PC-9 (cell line): ENCODE measurements at regions of chr3 and their contacts with region 1.

Region 1: DNA sequence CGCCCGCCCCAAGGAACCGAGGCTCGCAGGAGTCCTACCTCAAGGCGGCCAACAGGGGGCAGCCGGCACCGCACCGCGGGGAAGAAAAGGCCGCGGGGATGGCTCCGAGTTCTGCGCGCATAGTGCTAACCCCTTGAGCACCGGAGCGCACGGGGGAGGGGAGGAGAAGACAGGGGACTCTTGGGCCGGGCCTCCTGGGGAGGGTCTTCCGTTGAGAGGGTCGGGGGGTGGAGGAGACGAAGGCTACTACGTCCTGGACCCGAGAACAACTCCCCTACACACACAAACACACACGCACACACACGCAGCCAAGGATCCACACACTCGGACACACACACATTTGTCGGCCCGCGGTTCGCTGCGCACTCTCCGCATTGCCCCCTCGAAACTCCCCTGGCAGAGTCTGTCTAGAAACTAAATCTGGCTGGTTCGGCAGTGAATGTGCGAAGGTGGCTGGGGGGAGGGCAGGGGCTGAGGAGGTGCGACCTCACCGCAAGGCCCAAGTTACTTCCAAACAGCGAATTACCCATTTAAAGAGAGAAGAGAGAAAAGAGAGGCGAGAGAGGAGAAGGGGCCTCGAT is 1.8 kb downstream of the WNT5A start:
- DNase-seq: peak in 1 of 2 experiments; percentile 79
- H3K4me3 ChIP-seq: peak overlapping the region; percentile 58; the same call in 1 of the 2 replicates
- H3K27ac ChIP-seq: peak overlapping the region; percentile 73
- H3K4me1 ChIP-seq: peaks cover 6% of the 10 kb centered on the region
- H3K27me3 ChIP-seq: no peaks in the 10 kb centered on the region
- CTCF ChIP-seq: peak; percentile 27

Region 2: GRCh38 chr3:54853573-54854404 is 631.5 kb before region 1 on chr3:
- CTCF ChIA-PET with region 1: interaction called, 5 read pairs
- POLR2A ChIA-PET with region 1: no interaction called
- intact Hi-C with region 1: loop called (anchors 5 kb)
- DNase-seq: peak in 1 of 2 experiments; percentile 67
- H3K4me3 ChIP-seq: no peak overlapping the region
- H3K27ac ChIP-seq: no peak overlapping the region
- H3K4me1 ChIP-seq: no peaks in the 10 kb centered on the region
- H3K27me3 ChIP-seq: no peaks in the 10 kb centered on the region
- CTCF ChIP-seq: peak; percentile 93

Region 3: DNA sequence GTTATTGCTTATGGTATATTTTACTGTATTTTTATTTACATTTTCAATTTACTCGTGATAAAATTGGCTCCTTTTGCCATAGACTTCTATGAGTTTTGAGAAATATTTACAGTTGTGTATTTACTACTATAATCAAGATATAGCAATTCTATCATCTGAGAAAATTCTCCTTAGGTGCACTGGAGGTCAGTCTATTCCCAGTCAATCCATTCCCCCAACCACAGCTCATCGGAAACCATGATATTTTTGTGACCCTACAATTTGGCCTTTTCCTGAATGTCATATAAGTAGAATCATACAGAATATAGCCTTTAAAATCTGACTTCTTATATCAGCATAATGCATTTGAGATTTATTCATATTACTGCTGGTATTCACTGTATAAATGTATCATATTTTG is 442.7 kb before region 1 on chr3:
- CTCF ChIA-PET with region 1: no interaction called
- POLR2A ChIA-PET with region 1: no interaction called
- intact Hi-C with region 1: loop called (anchors 10 kb)
- DNase-seq: no peak
- H3K4me3 ChIP-seq: no peak overlapping the region
- H3K27ac ChIP-seq: no peak overlapping the region
- H3K4me1 ChIP-seq: no peaks in the 10 kb centered on the region
- H3K27me3 ChIP-seq: no peaks in the 10 kb centered on the region
- CTCF ChIP-seq: no peak

Region 4: DNA sequence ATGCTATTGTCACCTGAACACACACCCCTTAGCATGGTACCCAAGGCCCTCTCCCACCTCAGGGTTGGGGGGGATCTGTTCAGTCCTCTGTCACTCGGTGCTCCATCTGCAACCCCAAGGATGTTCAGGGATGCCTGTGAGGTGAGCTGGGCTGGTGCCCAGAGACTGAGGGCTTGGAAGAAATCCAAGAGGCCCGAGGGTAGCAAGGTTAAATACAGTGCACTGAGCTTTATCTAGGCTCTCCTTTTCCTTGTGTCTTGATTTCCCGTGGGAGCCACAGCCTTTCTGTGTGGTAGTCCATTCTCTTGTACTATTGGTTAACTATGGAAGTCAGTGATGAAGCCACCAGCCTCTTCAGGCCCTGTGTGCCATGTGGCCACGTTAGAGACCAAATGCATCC is 20.5 kb after region 1 on chr3:
- CTCF ChIA-PET with region 1: no interaction called
- POLR2A ChIA-PET with region 1: interaction called, 9 read pairs
- intact Hi-C with region 1: loop called (anchors 2 kb)
- DNase-seq: peak; percentile 44 to 66
- H3K4me3 ChIP-seq: no peak overlapping the region
- H3K27ac ChIP-seq: peak overlapping the region; percentile 29; the same call in 1 of the 2 replicates
- H3K4me1 ChIP-seq: no peaks in the 10 kb centered on the region
- H3K27me3 ChIP-seq: no peaks in the 10 kb centered on the region
- CTCF ChIP-seq: no peak

Region 5: GRCh38 chr3:55571913-55572312 is 86.6 kb after region 1 on chr3:
- CTCF ChIA-PET with region 1: interaction called, 8 read pairs
- POLR2A ChIA-PET with region 1: interaction called, 4 read pairs
- intact Hi-C with region 1: loop called (anchors 1 kb)
- DNase-seq: peak in 1 of 2 experiments; percentile 87
- H3K4me3 ChIP-seq: no peak overlapping the region
- H3K27ac ChIP-seq: no peak overlapping the region
- H3K4me1 ChIP-seq: peaks cover 19% of the 10 kb centered on the region
- H3K27me3 ChIP-seq: no peaks in the 10 kb centered on the region
- CTCF ChIP-seq: no peak

Region 6: GRCh38 chr3:55637906-55638638 is 152.8 kb after region 1 on chr3:
- CTCF ChIA-PET with region 1: interaction called, 12 read pairs
- POLR2A ChIA-PET with region 1: interaction called, 3 read pairs
- intact Hi-C with region 1: no loop called
- DNase-seq: no peak
- H3K4me3 ChIP-seq: no peak overlapping the region
- H3K27ac ChIP-seq: peak overlapping the region; percentile 96
- H3K4me1 ChIP-seq: peaks cover 70% of the 10 kb centered on the region
- H3K27me3 ChIP-seq: no peaks in the 10 kb centered on the region
- CTCF ChIP-seq: no peak

Region 7: GRCh38 chr3:56042326-56042951 is 557.1 kb after region 1 on chr3:
- CTCF ChIA-PET with region 1: no interaction called
- POLR2A ChIA-PET with region 1: no interaction called
- intact Hi-C with region 1: loop called (anchors 10 kb)
- DNase-seq: peak; percentile 1 to 50
- H3K4me3 ChIP-seq: no peak overlapping the region
- H3K27ac ChIP-seq: no peak overlapping the region
- H3K4me1 ChIP-seq: no peaks in the 10 kb centered on the region
- H3K27me3 ChIP-seq: peaks cover 3% of the 10 kb centered on the region; the same call in 1 of the 2 replicates
- CTCF ChIP-seq: peak; percentile 71

Region 8: GRCh38 chr3:56207922-56208321 is 722.6 kb after region 1 on chr3:
- CTCF ChIA-PET with region 1: no interaction called
- POLR2A ChIA-PET with region 1: no interaction called
- intact Hi-C with region 1: no loop called
- DNase-seq: no peak
- H3K4me3 ChIP-seq: no peak overlapping the region
- H3K27ac ChIP-seq: no peak overlapping the region
- H3K4me1 ChIP-seq: no peaks in the 10 kb centered on the region
- H3K27me3 ChIP-seq: peaks cover 11% of the 10 kb centered on the region; the same call in 1 of the 2 replicates
- CTCF ChIP-seq: no peak